ENCODE measurements at regions of chr6 and their contacts with region 1.

Region 1: DNA sequence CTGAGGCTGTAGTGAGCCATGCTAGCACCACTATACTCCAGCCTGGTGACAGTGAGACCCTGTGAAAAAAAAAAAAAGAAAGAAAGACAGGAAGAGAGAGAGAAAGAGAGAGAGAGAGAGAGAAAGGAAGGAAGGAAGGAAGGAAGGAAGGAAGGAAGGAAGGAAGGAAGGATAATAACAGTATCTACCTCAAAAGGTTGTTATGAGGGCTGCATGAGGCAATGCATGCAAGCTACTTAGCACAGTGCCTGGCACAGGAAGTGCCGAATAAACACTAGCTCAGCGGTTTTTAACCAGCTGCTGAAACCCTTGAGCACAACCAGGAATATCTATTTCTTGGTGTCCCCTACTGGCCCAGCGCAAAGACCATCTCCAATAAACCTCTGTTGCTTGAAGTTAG is 62.3 kb upstream of the TBC1D7 start:
- DNase-seq: no peak

Region 2: GRCh38 chr6:13526727-13527670 is 136.3 kb after region 1 on chr6:
- intact Hi-C with region 1: loop called in 1 of 2 experiments (anchors 5 kb)
- DNase-seq: no peak